ENCODE measurements at regions of chr19 and their contacts with region 1.

Region 1: GRCh38 chr19:13833330-13834243 is 38.3 kb downstream of the ZSWIM4 start:
- DNase-seq: peak; percentile 82 to 97 (median 92)
- ATAC-seq: peak; percentile 84
- H3K4me3 ChIP-seq: peak overlapping the region; percentile 61
- H3K4me3 Mint-ChIP-seq: peak overlapping the region; percentile 89
- H3K27ac ChIP-seq: peak overlapping the region; percentile 62 to 76
- H3K27ac Mint-ChIP-seq: peak overlapping the region; percentile 99
- H3K4me1 ChIP-seq: peaks cover 57% of the 10 kb centered on the region
- H3K4me1 Mint-ChIP-seq: peaks cover 38% of the 10 kb centered on the region
- H3K27me3 ChIP-seq: no peaks in the 10 kb centered on the region
- H3K27me3 Mint-ChIP-seq: no peaks in the 10 kb centered on the region
- CTCF ChIP-seq: peak; percentile 18

Region 2: GRCh38 chr19:12703046-12703445 is 1130.5 kb before region 1 on chr19:
- CTCF ChIA-PET with region 1: no interaction called
- POLR2A ChIA-PET with region 1: no interaction called
- intact Hi-C with region 1: no loop called
- DNase-seq: peak in 1 of 14 experiments; percentile 32
- ATAC-seq: peak; percentile 41
- H3K4me3 ChIP-seq: no peak overlapping the region
- H3K4me3 Mint-ChIP-seq: no peak overlapping the region
- H3K27ac ChIP-seq: no peak overlapping the region
- H3K27ac Mint-ChIP-seq: no peak overlapping the region
- H3K4me1 ChIP-seq: no peaks in the 10 kb centered on the region
- H3K4me1 Mint-ChIP-seq: peaks cover 3% of the 10 kb centered on the region
- H3K27me3 ChIP-seq: no peaks in the 10 kb centered on the region
- H3K27me3 Mint-ChIP-seq: no peaks in the 10 kb centered on the region
- CTCF ChIP-seq: no peak

Region 3: GRCh38 chr19:13637664-13638063 is 195.9 kb before region 1 on chr19:
- CTCF ChIA-PET with region 1: no interaction called
- POLR2A ChIA-PET with region 1: no interaction called
- intact Hi-C with region 1: no loop called
- DNase-seq: no peak
- ATAC-seq: no peak
- H3K4me3 ChIP-seq: no peak overlapping the region
- H3K4me3 Mint-ChIP-seq: no peak overlapping the region
- H3K27ac ChIP-seq: no peak overlapping the region
- H3K27ac Mint-ChIP-seq: no peak overlapping the region
- H3K4me1 ChIP-seq: no peaks in the 10 kb centered on the region
- H3K4me1 Mint-ChIP-seq: no peaks in the 10 kb centered on the region
- H3K27me3 ChIP-seq: peaks cover 0 to 5% of the 10 kb centered on the region in 2 experiments
- H3K27me3 Mint-ChIP-seq: peaks cover 41% of the 10 kb centered on the region
- CTCF ChIP-seq: no peak

Region 4: GRCh38 chr19:13794757-13795589 is 38.6 kb before region 1 on chr19 and contains the start of gene ZSWIM4:
- CTCF ChIA-PET with region 1: interaction called, 3 read pairs
- POLR2A ChIA-PET with region 1: interaction called, 38 read pairs
- intact Hi-C with region 1: loop called in 1 of 2 experiments (anchors 2 kb)
- DNase-seq: peak; percentile 66 to 97 (median 90)
- ATAC-seq: peak; percentile 85
- H3K4me3 ChIP-seq: peak within 1 kb of the TSS; percentile 70
- H3K4me3 Mint-ChIP-seq: peak within 1 kb of the TSS; percentile 96
- H3K27ac ChIP-seq: peak within 1 kb of the TSS; percentile 59 to 64
- H3K27ac Mint-ChIP-seq: peak within 1 kb of the TSS; percentile 90
- H3K4me1 ChIP-seq: peaks cover 34% of the 10 kb centered on the region
- H3K4me1 Mint-ChIP-seq: peaks cover 40% of the 10 kb centered on the region
- H3K27me3 ChIP-seq: no peaks in the 10 kb centered on the region
- H3K27me3 Mint-ChIP-seq: no peaks in the 10 kb centered on the region
- CTCF ChIP-seq: no peak
- total RNA-seq, gene ZSWIM4: 3.5 to 3.8 TPM

Region 5: GRCh38 chr19:13846557-13847406 is 13.2 kb after region 1 on chr19:
- CTCF ChIA-PET with region 1: interaction called, 6 read pairs
- POLR2A ChIA-PET with region 1: interaction called, 48 read pairs
- intact Hi-C with region 1: loop called in 1 of 2 experiments (anchors 1 kb)
- DNase-seq: peak; percentile 86 to 99 (median 96)
- ATAC-seq: peak; percentile 61
- H3K4me3 ChIP-seq: peak overlapping the region; percentile 76
- H3K4me3 Mint-ChIP-seq: peak overlapping the region; percentile 86
- H3K27ac ChIP-seq: peak overlapping the region; percentile 100
- H3K27ac Mint-ChIP-seq: peak overlapping the region; percentile 99
- H3K4me1 ChIP-seq: peaks cover 86% of the 10 kb centered on the region
- H3K4me1 Mint-ChIP-seq: peaks cover 63% of the 10 kb centered on the region
- H3K27me3 ChIP-seq: no peaks in the 10 kb centered on the region
- H3K27me3 Mint-ChIP-seq: no peaks in the 10 kb centered on the region
- CTCF ChIP-seq: no peak

Region 6: GRCh38 chr19:13872695-13873389 is 39.3 kb after region 1 on chr19:
- CTCF ChIA-PET with region 1: no interaction called
- POLR2A ChIA-PET with region 1: no interaction called
- intact Hi-C with region 1: no loop called
- DNase-seq: peak in 3 of 14 experiments; percentile 36 to 63 (median 52)
- ATAC-seq: peak; percentile 83
- H3K4me3 ChIP-seq: peak overlapping the region; percentile 24
- H3K4me3 Mint-ChIP-seq: peak overlapping the region; percentile 65
- H3K27ac ChIP-seq: no peak overlapping the region
- H3K27ac Mint-ChIP-seq: no peak overlapping the region
- H3K4me1 ChIP-seq: peaks cover 12% of the 10 kb centered on the region
- H3K4me1 Mint-ChIP-seq: peaks cover 8% of the 10 kb centered on the region
- H3K27me3 ChIP-seq: peaks cover 3 to 21% of the 10 kb centered on the region in 2 experiments
- H3K27me3 Mint-ChIP-seq: peaks cover 39% of the 10 kb centered on the region
- CTCF ChIP-seq: no peak